CD4-positive, alpha-beta T cell (primary cell): ENCODE measurements at regions of chr2 and their contacts with region 1.

Region 1: GRCh38 chr2:207710814-207711740 is at the start of gene CCNYL1:
- DNase-seq: peak; percentile 95 to 99 (median 97)
- ATAC-seq: peak; percentile 97
- H3K4me3 ChIP-seq: peak within 1 kb of the TSS; percentile 98
- H3K4me3 Mint-ChIP-seq: peak within 1 kb of the TSS; percentile 95
- H3K27ac ChIP-seq: peak within 1 kb of the TSS; percentile 49 to 75
- H3K27ac Mint-ChIP-seq: peak within 1 kb of the TSS; percentile 82
- H3K4me1 ChIP-seq: peaks cover 23% of the 10 kb centered on the region
- H3K4me1 Mint-ChIP-seq: peaks cover 23% of the 10 kb centered on the region
- H3K27me3 ChIP-seq: no peaks in the 10 kb centered on the region
- H3K27me3 Mint-ChIP-seq: no peaks in the 10 kb centered on the region
- CTCF ChIP-seq: no peak
- total RNA-seq, gene CCNYL1: 8.7 to 11.1 TPM

Region 2: GRCh38 chr2:206085742-206086445 is 1625.2 kb before region 1 on chr2 and contains the start of gene INO80D:
- CTCF ChIA-PET with region 1: no interaction called
- POLR2A ChIA-PET with region 1: no interaction called
- intact Hi-C with region 1: loop called in 1 of 2 experiments (anchors 5 kb)
- DNase-seq: peak; percentile 62 to 92 (median 72)
- ATAC-seq: peak; percentile 94
- H3K4me3 ChIP-seq: peak within 1 kb of the TSS; percentile 90
- H3K4me3 Mint-ChIP-seq: peak within 1 kb of the TSS; percentile 98
- H3K27ac ChIP-seq: peak within 1 kb of the TSS; percentile 94 to 95
- H3K27ac Mint-ChIP-seq: peak within 1 kb of the TSS; percentile 100
- H3K4me1 ChIP-seq: peaks cover 26% of the 10 kb centered on the region
- H3K4me1 Mint-ChIP-seq: peaks cover 53% of the 10 kb centered on the region
- H3K27me3 ChIP-seq: no peaks in the 10 kb centered on the region
- H3K27me3 Mint-ChIP-seq: no peaks in the 10 kb centered on the region
- CTCF ChIP-seq: peak; percentile 60
- total RNA-seq, gene INO80D: 45.3 to 48.9 TPM

Region 3: DNA sequence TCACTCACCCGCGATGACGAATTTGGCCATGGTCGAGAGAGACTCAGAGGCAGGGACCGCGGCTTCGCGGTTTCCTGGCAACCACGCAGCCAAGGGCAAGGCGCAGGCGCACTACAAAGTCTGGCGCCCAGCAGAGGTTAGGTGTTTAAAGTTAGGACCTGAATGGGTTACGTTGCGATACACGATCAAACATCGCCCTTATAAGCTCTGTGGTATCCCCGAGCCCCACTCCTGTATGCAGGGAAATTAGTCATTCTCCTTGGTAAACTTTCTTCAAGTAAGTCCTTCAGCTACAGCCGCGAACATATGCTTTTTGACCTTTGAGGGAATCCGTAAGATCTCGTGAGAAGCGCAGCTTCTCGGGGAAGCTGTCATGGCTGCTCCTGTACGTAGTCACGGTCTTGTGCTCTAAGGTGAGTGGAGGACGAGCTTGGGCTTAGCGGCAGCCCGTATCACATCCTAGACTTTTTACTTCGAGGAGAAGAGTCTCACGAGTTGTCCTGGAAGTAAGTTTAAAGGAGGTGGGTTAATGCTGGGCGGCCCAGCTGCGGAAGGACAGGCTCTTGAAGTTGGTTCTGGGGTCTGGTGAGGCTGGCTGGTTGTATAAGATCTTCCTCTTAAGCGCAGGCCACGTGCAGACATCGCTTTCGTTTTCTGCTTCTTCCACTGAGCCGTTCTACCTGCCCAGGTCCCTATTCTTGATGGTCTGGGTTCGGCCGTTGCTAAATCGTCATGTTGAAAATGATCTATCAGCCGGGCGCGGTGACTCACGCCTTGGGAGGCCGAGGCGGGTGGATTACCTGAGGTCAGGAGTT is 945.6 kb before region 1 on chr2 and contains the starts of genes FASTKD2 and MDH1B:
- CTCF ChIA-PET with region 1: no interaction called
- POLR2A ChIA-PET with region 1: interaction called, 6 read pairs
- intact Hi-C with region 1: loop called in 1 of 2 experiments (anchors 5 kb)
- DNase-seq: peak; percentile 63 to 94 (median 74)
- ATAC-seq: peak; percentile 89
- H3K4me3 ChIP-seq: peak within 1 kb of the TSS; percentile 71
- H3K4me3 Mint-ChIP-seq: peak within 1 kb of the TSS; percentile 96
- H3K27ac ChIP-seq: peak within 1 kb of the TSS; percentile 80 to 85
- H3K27ac Mint-ChIP-seq: peak within 1 kb of the TSS; percentile 97
- H3K4me1 ChIP-seq: peaks cover 16% of the 10 kb centered on the region
- H3K4me1 Mint-ChIP-seq: peaks cover 46% of the 10 kb centered on the region
- H3K27me3 ChIP-seq: peaks cover 0 to 13% of the 10 kb centered on the region in 2 experiments
- H3K27me3 Mint-ChIP-seq: peaks cover 5% of the 10 kb centered on the region
- CTCF ChIP-seq: no peak
- total RNA-seq, gene FASTKD2: 24.9 to 25.7 TPM
- total RNA-seq, gene MDH1B: 0.25 to 0.31 TPM

Region 4: GRCh38 chr2:206962966-206963365 is 748.1 kb before region 1 on chr2:
- CTCF ChIA-PET with region 1: no interaction called
- POLR2A ChIA-PET with region 1: no interaction called
- intact Hi-C with region 1: no loop called
- DNase-seq: no peak
- ATAC-seq: no peak
- H3K4me3 ChIP-seq: no peak overlapping the region
- H3K4me3 Mint-ChIP-seq: no peak overlapping the region
- H3K27ac ChIP-seq: no peak overlapping the region
- H3K27ac Mint-ChIP-seq: no peak overlapping the region
- H3K4me1 ChIP-seq: no peaks in the 10 kb centered on the region
- H3K4me1 Mint-ChIP-seq: no peaks in the 10 kb centered on the region
- H3K27me3 ChIP-seq: no peaks in the 10 kb centered on the region
- H3K27me3 Mint-ChIP-seq: no peaks in the 10 kb centered on the region
- CTCF ChIP-seq: no peak

Region 5: DNA sequence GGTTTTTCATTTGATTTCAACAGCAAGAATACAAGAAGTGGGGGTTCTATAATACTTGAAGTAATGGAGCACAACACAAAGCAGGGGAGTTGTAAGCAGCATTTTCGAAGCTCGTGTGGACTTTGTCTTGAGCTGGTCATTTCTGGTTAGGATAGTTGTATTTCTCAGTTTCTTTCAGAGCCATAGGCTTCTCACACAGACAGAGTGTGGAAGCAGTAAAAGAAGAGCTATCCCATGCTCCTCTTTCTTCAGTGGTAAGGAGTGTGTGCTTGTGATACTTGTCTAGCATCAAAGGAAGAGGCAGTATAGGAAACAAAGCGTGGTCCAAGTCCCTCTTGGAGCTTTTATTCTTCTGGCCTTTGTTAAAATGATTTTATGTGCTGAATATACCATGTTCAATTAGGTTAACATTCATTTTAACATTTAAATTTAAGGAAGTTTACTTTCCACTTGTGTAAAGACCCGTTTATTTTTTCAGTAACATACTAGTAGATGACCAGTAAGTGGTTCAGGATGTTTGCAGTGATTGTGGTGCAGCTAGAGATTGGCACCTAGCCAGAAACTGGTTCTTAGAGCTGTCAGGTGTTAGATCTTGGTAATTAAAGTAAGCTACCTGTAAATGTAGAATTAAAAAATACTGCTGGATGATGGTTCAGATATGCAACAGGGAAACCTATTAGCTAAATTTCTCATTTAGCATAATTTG is 14.9 kb after region 1 on chr2:
- CTCF ChIA-PET with region 1: no interaction called
- POLR2A ChIA-PET with region 1: interaction called, 36 read pairs
- intact Hi-C with region 1: no loop called
- DNase-seq: peak in 5 of 14 experiments; percentile 5 to 54 (median 40)
- ATAC-seq: no peak
- H3K4me3 ChIP-seq: no peak overlapping the region
- H3K4me3 Mint-ChIP-seq: no peak overlapping the region
- H3K27ac ChIP-seq: no peak overlapping the region
- H3K27ac Mint-ChIP-seq: no peak overlapping the region
- H3K4me1 ChIP-seq: no peaks in the 10 kb centered on the region
- H3K4me1 Mint-ChIP-seq: peaks cover 47% of the 10 kb centered on the region
- H3K27me3 ChIP-seq: no peaks in the 10 kb centered on the region
- H3K27me3 Mint-ChIP-seq: no peaks in the 10 kb centered on the region
- CTCF ChIP-seq: no peak

Region 6: GRCh38 chr2:208025037-208025813 is 314.1 kb after region 1 on chr2 and contains the start of gene PLEKHM3:
- CTCF ChIA-PET with region 1: no interaction called
- POLR2A ChIA-PET with region 1: interaction called, 15 read pairs
- intact Hi-C with region 1: loop called in 1 of 2 experiments (anchors 5 kb)
- DNase-seq: peak; percentile 39 to 83 (median 67)
- ATAC-seq: peak; percentile 74
- H3K4me3 ChIP-seq: peak within 1 kb of the TSS; percentile 82
- H3K4me3 Mint-ChIP-seq: peak within 1 kb of the TSS; percentile 89
- H3K27ac ChIP-seq: peak within 1 kb of the TSS; percentile 58 to 63
- H3K27ac Mint-ChIP-seq: peak within 1 kb of the TSS; percentile 92
- H3K4me1 ChIP-seq: peaks cover 10% of the 10 kb centered on the region
- H3K4me1 Mint-ChIP-seq: peaks cover 21% of the 10 kb centered on the region
- H3K27me3 ChIP-seq: no peaks in the 10 kb centered on the region
- H3K27me3 Mint-ChIP-seq: no peaks in the 10 kb centered on the region
- CTCF ChIP-seq: no peak
- total RNA-seq, gene PLEKHM3: 11.3 to 11.6 TPM